Caco-2 (cell line): ENCODE measurements at regions of chr6 and their contacts with region 1.

Region 1: DNA sequence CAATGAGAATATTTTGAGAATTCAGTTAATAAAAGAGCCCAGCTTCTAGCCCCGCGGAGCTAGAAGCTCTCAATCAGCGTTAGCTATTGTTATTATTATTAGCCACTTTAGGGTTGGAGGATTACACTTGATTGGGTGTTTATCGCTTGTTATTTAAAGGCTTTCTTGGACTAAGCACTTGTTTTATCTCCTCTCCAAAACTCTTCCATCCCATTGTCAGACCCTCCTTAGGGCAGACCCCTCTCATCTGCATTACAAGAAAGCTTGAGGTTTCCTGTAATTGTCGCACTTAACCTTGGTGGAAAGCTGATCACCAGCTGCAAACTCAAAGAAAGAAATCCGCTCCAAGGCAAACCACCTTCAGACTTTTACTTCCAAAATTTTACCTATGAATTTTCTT is 4.8 kb downstream of the DPPA5 start:
- DNase-seq: no peak
- H3K4me3 ChIP-seq: no peak overlapping the region
- H3K4me3 Mint-ChIP-seq: no peak overlapping the region
- H3K27ac Mint-ChIP-seq: no peak overlapping the region
- H3K4me1 ChIP-seq: no peaks in the 10 kb centered on the region
- H3K4me1 Mint-ChIP-seq: no peaks in the 10 kb centered on the region
- H3K27me3 ChIP-seq: no peaks in the 10 kb centered on the region
- H3K27me3 Mint-ChIP-seq: no peaks in the 10 kb centered on the region
- CTCF ChIP-seq: no peak

Region 2: GRCh38 chr6:73644941-73645591 is 295.8 kb after region 1 on chr6:
- CTCF ChIA-PET with region 1: no interaction called
- POLR2A ChIA-PET with region 1: interaction called, 13 read pairs
- intact Hi-C with region 1: no loop called
- DNase-seq: no peak
- H3K4me3 ChIP-seq: peak overlapping the region; percentile 26
- H3K4me3 Mint-ChIP-seq: peak overlapping the region; percentile 79
- H3K27ac Mint-ChIP-seq: no peak overlapping the region
- H3K4me1 ChIP-seq: peaks cover 13% of the 10 kb centered on the region
- H3K4me1 Mint-ChIP-seq: peaks cover 22% of the 10 kb centered on the region
- H3K27me3 ChIP-seq: no peaks in the 10 kb centered on the region
- H3K27me3 Mint-ChIP-seq: no peaks in the 10 kb centered on the region
- CTCF ChIP-seq: no peak